Ascending aorta (tissue), 2 donors: ENCODE measurements at regions of chr22 and their contacts with region 1.

Region 1: DNA sequence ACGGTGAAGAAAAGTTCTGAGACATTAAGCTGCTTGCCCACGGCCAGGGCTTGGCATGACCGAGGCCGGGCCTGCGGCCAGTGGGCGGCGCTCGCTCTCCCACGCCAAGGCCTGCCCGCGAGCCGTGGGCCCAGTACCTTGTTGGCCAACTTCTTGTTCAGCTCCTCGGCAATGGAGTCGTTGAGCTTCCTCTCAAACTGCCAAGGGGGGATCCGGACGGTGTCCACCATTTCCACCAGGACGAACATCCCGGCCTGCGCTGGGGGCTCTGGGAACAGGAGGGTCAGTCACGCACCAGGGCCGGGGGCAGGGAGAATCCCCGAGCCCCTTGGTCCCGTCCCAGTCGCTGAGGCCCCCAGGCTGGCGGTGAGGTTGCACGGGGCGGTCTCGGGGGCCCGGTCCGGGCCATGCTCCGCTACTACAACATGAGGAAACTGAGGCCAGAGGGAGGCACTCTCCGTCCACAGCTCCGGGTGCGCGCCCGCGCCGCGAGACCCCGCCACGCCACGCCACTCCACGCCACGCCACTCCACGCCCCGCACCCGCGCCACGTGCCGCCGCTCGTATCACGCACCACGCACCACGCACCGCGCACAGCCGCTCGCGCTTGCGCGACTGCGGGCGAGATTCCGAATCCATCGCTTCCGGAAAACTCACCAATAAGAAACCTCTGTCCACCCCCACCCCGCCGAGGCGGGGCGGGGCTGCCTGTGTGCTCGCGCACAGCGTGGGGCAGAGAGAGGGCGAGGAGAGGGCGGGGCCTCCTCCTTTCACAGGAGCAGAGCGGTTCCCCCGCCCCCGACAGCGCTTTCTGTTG is at the start of gene POLR3H:
- DNase-seq: peak; percentile 95 to 99
- H3K4me3 ChIP-seq: peak within 1 kb of the TSS; percentile 85 to 92
- H3K27ac ChIP-seq: peak within 1 kb of the TSS; percentile 87
- H3K4me1 ChIP-seq: peaks cover 7 to 26% of the 10 kb centered on the region in 2 donors
- H3K27me3 ChIP-seq: no peaks in the 10 kb centered on the region
- CTCF ChIP-seq: peak; percentile 59 to 70 (median 68)
- total RNA-seq, gene POLR3H: 34.7 TPM

Region 2: DNA sequence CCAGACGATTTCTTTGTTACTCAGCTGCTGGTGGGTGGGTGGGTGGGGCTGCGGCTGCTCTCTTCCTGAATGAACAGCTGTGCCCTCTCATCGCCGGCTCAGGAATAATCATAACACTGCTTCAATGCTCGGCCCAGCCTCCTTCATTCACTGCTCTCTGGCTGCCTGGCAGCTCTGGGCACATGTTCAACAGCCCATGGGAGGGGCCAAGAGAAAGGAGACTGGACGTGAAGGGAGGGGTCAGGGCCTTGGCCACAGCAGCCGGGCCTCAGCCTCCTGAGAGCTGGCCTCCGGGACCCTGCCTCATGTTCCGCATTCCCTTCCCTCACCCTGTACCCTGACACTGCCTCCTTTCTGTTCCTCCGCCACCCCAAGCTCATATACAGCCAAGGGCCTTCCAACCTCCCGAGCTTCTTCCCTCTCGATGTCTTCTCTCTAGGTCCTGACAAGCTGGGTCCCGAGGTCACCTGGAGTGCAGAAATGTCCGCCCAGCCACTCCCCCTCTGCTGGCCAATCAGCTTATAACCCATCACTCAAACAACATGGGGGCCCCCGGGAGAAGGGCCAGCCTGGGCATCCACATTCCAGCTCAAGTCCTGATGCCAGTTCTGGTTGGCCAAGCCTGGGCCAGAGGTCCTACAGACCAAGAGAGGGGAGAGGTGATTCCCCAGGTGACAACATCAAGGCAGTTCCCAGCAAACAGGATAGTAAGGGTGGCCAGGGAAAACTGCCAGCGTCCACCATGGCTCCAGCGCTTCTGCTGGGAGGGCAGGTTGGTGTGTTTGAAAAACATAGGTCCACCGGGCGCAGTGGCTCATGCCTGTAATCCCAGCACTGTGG is 13.6 kb after region 1 on chr22:
- intact Hi-C with region 1: loop called (anchors 1 kb)
- DNase-seq: peak; percentile 54 to 88
- H3K4me3 ChIP-seq: peak overlapping the region in 1 of 2 donors; percentile 24
- H3K27ac ChIP-seq: peak overlapping the region; percentile 83 to 91
- H3K4me1 ChIP-seq: peaks cover 0 to 25% of the 10 kb centered on the region in 2 donors
- H3K27me3 ChIP-seq: no peaks in the 10 kb centered on the region
- CTCF ChIP-seq: no peak

Region 3: GRCh38 chr22:41589391-41590241 is 45.6 kb after region 1 on chr22 and contains the start of gene PMM1:
- intact Hi-C with region 1: loop called (anchors 1 kb)
- DNase-seq: peak; percentile 100
- H3K4me3 ChIP-seq: peak within 1 kb of the TSS; percentile 79 to 100
- H3K27ac ChIP-seq: peak within 1 kb of the TSS; percentile 62 to 90
- H3K4me1 ChIP-seq: peaks cover 0 to 9% of the 10 kb centered on the region in 2 donors
- H3K27me3 ChIP-seq: no peaks in the 10 kb centered on the region
- CTCF ChIP-seq: no peak
- total RNA-seq, gene PMM1: 12.5 TPM

Region 4: GRCh38 chr22:41596776-41597634 is 52.9 kb after region 1 on chr22:
- intact Hi-C with region 1: loop called (anchors 1 kb)
- DNase-seq: no peak
- H3K4me3 ChIP-seq: no peak overlapping the region
- H3K27ac ChIP-seq: peak overlapping the region in 1 of 2 donors; percentile 10
- H3K4me1 ChIP-seq: peaks cover 0 to 5% of the 10 kb centered on the region in 2 donors
- H3K27me3 ChIP-seq: no peaks in the 10 kb centered on the region
- CTCF ChIP-seq: peak; percentile 61 to 77 (median 74)

Region 5: GRCh38 chr22:41621099-41621910 is 77.2 kb after region 1 on chr22 and contains the start of gene XRCC6:
- intact Hi-C with region 1: loop called (anchors 2 kb)
- DNase-seq: peak; percentile 100
- H3K4me3 ChIP-seq: peak within 1 kb of the TSS; percentile 86 to 91
- H3K27ac ChIP-seq: peak within 1 kb of the TSS; percentile 95 to 96
- H3K4me1 ChIP-seq: peaks cover 4 to 20% of the 10 kb centered on the region in 2 donors
- H3K27me3 ChIP-seq: no peaks in the 10 kb centered on the region
- CTCF ChIP-seq: no peak
- total RNA-seq, gene XRCC6: 89.7 TPM